Endothelial cell of umbilical vein (primary cell): ENCODE measurements at regions of chr14 and their contacts with region 1.

Region 1: GRCh38 chr14:24241829-24242443 is 487 bp downstream of the TINF2 start:
- DNase-seq: no peak
- H3K4me3 ChIP-seq: peak overlapping the region; percentile 31 to 67 (median 57)
- H3K27ac ChIP-seq: peak overlapping the region; percentile 98
- H3K4me1 ChIP-seq: peaks cover 30% of the 10 kb centered on the region
- H3K27me3 ChIP-seq: no peaks in the 10 kb centered on the region
- CTCF ChIP-seq: peak; percentile 16 to 75
- POLR2A ChIP-seq: no peak

Region 2: DNA sequence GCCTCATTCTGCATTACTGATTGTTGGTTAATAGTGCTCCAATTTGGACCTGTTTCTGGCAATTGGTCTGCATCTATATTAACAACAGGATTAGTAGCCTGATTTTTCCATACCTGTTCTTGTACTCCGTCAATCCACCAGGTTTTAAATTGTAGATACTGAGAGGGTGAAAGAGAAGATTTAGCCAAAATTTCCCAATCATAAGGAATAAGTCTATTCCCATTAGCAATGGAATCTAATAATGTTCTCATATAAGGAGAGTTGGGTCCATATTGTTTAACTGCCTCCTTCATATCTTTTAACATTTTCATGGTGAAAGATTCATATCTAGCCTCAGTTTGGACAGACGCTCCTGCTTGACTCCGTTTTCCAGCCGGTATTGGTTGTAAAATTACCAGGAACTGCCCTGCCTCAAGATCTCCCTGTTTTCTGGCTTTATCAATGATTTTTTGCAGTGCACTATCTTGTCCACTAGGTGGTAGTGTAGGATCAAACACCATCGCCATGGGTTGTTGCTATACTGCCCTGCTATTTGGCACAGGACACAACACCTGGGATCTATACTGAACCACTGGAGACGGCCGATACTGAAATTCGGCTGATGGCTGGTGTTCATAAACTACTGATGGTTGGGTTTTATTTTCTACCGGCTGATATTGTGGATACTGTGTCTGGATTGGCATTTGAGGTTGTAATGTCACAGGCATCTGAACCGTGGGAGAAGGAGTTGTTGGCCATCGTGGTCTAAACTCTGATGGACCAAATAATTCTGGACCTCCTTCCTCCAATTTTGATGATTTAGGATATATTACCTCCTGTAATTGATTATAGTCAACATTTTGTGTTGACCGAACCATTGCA is 228.1 kb before region 1 on chr14:
- CTCF ChIA-PET with region 1: no interaction called
- POLR2A ChIA-PET with region 1: no interaction called
- dilution Hi-C with region 1: no loop called
- intact Hi-C with region 1: loop called (anchors 1 kb)
- DNase-seq: peak; percentile 82
- H3K4me3 ChIP-seq: no peak overlapping the region
- H3K27ac ChIP-seq: no peak overlapping the region
- H3K4me1 ChIP-seq: peaks cover 3% of the 10 kb centered on the region
- H3K27me3 ChIP-seq: peaks cover 0 to 2% of the 10 kb centered on the region in 2 experiments
- CTCF ChIP-seq: peak; percentile 64 to 72
- POLR2A ChIP-seq: no peak

Region 3: GRCh38 chr14:24195191-24196070 is 46.5 kb before region 1 on chr14 and contains the start of gene TM9SF1:
- CTCF ChIA-PET with region 1: interaction called, 7 read pairs
- POLR2A ChIA-PET with region 1: interaction called, 7 read pairs
- dilution Hi-C with region 1: no loop called
- intact Hi-C with region 1: loop called (anchors 1 kb)
- DNase-seq: peak; percentile 93
- H3K4me3 ChIP-seq: peak within 1 kb of the TSS; percentile 36 to 82 (median 69)
- H3K27ac ChIP-seq: peak within 1 kb of the TSS; percentile 93
- H3K4me1 ChIP-seq: peaks cover 16% of the 10 kb centered on the region
- H3K27me3 ChIP-seq: no peaks in the 10 kb centered on the region
- CTCF ChIP-seq: no peak
- POLR2A ChIP-seq: no peak
- total RNA-seq, gene TM9SF1: 58.5 and 60.7 TPM in 2 replicates

Region 4: GRCh38 chr14:24224618-24225071 is 17.3 kb before region 1 on chr14:
- CTCF ChIA-PET with region 1: interaction called, 20 read pairs
- POLR2A ChIA-PET with region 1: interaction called, 4 read pairs
- dilution Hi-C with region 1: no loop called
- intact Hi-C with region 1: loop called (anchors 1 kb)
- DNase-seq: peak; percentile 95
- H3K4me3 ChIP-seq: no peak overlapping the region
- H3K27ac ChIP-seq: peak overlapping the region; percentile 99
- H3K4me1 ChIP-seq: peaks cover 28% of the 10 kb centered on the region
- H3K27me3 ChIP-seq: no peaks in the 10 kb centered on the region
- CTCF ChIP-seq: no peak
- POLR2A ChIP-seq: no peak

Region 5: DNA sequence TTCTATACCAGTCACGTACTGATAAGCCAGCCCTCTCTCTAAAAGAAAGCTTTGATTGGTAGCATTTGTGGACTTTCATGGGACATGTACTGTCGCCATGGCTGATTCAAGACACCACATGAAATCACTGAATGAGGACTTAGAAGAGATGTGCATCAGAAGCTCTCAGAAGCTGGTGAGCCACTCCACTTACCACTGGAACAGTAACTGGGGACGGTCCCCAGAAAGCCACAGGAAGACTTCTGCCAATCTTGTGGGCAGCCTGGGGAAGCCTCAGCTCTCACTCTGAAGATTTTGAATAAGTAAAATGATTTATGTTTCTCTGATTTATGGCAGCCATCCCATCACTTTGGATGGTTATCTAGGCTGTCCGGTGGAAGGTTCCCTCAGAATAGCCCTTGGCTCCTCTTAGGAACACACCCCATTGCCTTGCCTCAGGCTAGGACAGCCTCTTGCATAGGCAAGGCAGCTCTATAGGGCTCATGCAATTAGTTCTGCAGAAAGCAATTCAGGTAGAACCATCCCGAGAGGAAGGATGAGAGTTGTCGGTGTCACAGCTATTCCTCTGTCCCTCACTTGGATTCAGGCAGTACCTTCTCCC is 47.8 kb after region 1 on chr14:
- CTCF ChIA-PET with region 1: interaction called, 13 read pairs
- POLR2A ChIA-PET with region 1: no interaction called
- dilution Hi-C with region 1: no loop called
- intact Hi-C with region 1: no loop called
- DNase-seq: no peak
- H3K4me3 ChIP-seq: no peak overlapping the region
- H3K27ac ChIP-seq: no peak overlapping the region
- H3K4me1 ChIP-seq: no peaks in the 10 kb centered on the region
- H3K27me3 ChIP-seq: no peaks in the 10 kb centered on the region
- CTCF ChIP-seq: no peak
- POLR2A ChIP-seq: no peak